Mammary epithelial cell (primary cell): ENCODE measurements at regions of chr17 and their contacts with region 1.

Region 1: GRCh38 chr17:15502369-15503112 is 35.1 kb upstream of the CDRT4 start:
- DNase-seq: peak; percentile 66
- H3K4me3 ChIP-seq: no peak overlapping the region
- H3K27ac ChIP-seq: no peak overlapping the region
- H3K4me1 ChIP-seq: peaks cover 6% of the 10 kb centered on the region
- H3K27me3 ChIP-seq: no peaks in the 10 kb centered on the region
- CTCF ChIP-seq: peak; percentile 86 to 91

Region 2: GRCh38 chr17:15377616-15378015 is 124.9 kb before region 1 on chr17:
- CTCF ChIA-PET with region 1: no interaction called
- dilution Hi-C with region 1: no loop called
- in situ Hi-C with region 1: no loop called
- intact Hi-C with region 1: loop called (anchors 5 kb)
- DNase-seq: no peak
- H3K4me3 ChIP-seq: no peak overlapping the region
- H3K27ac ChIP-seq: no peak overlapping the region
- H3K4me1 ChIP-seq: peaks cover 12% of the 10 kb centered on the region
- H3K27me3 ChIP-seq: no peaks in the 10 kb centered on the region
- CTCF ChIP-seq: no peak

Region 3: DNA sequence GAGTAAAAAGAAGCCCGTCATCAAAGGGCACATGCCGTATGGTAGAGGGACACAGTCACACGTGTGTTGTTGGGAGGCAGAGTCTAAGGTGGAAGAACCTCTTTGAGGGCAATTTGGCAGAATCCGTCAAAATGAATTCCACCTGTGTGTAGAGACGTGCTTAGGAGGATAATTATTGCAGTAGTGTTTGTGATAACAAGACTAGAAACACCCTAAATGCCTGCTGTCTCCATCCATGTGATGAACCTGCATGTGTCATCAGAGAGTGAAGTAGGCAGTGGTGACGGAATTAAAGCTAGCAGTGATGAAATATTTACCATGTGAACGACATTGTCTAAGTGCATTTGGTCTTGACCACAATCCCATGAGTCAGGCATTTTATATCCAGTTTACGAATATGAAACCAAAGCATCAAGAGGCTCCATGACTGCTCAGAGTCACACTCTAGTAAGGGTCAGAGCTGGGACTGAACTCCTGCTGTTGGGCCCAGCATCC is 381.1 kb after region 1 on chr17:
- CTCF ChIA-PET with region 1: no interaction called
- dilution Hi-C with region 1: no loop called
- in situ Hi-C with region 1: no loop called
- intact Hi-C with region 1: no loop called
- DNase-seq: peak; percentile 93
- H3K4me3 ChIP-seq: no peak overlapping the region
- H3K27ac ChIP-seq: no peak overlapping the region
- H3K4me1 ChIP-seq: peaks cover 4% of the 10 kb centered on the region
- H3K27me3 ChIP-seq: no peaks in the 10 kb centered on the region
- CTCF ChIP-seq: no peak